CD4-positive, alpha-beta memory T cell (primary cell): ENCODE measurements at regions of chr11 and their contacts with region 1.

Region 1: DNA sequence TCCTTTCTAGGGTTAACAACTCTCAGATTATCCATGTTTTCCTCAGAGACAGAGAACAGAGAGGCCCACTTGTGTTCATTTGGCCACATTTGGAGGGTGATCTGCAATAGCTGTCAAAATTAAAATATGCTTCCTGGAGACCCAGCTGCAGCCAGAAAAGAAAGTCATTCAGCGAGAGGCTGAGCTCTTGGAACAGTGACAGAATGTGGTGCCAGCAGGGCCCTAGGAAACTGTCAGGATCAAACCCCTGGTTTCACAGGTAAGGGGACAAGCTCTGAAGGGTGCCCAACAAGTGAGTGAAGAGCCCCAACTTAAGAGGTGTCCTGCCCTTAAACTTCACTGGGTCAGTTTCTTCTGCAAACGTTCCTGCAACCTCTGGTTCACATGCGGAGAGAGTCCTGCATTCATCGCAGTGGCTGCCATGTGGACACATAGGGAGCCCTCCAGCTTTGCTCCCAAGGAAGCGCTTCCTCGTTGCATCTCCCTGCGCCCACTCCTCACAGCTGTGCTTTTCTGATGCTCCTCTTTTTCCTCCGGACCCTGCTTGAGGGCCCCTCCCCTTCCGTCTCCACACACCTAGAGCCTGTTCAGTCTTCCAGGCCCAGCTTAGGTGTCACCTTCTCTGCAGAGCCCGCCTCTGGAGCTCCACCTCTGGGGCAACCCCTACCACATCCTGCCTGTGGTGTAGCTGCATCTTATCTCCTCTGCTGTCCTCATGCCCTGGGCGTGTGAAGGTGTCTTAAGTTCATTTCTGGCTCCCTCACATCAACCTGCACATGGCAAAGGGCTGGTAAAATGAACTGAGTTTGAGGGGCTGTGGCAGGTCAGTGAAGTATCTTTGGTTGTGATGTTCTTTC is 3.9 kb downstream of the UCP3 start:
- DNase-seq: peak; percentile 88 to 95 (median 91)
- H3K4me3 ChIP-seq: peak overlapping the region; percentile 18 to 50
- H3K4me3 Mint-ChIP-seq: peak overlapping the region; percentile 79 to 91 (median 86)
- H3K27ac ChIP-seq: peak overlapping the region; percentile 60
- H3K27ac Mint-ChIP-seq: peak overlapping the region; percentile 91 to 99 (median 97)
- H3K4me1 ChIP-seq: peaks cover 72% of the 10 kb centered on the region
- H3K4me1 Mint-ChIP-seq: peaks cover 55 to 82% (median 71%) of the 10 kb centered on the region in 4 donors
- H3K27me3 ChIP-seq: no peaks in the 10 kb centered on the region
- H3K27me3 Mint-ChIP-seq: no peaks in the 10 kb centered on the region

Region 2: GRCh38 chr11:73972620-73973449 is 32.2 kb before region 1 on chr11:
- CTCF ChIA-PET with region 1: interaction called, 11 read pairs
- POLR2A ChIA-PET with region 1: interaction called, 2,221 read pairs
- intact Hi-C with region 1: loop called (anchors 1 kb)
- DNase-seq: no peak
- H3K4me3 ChIP-seq: no peak overlapping the region
- H3K4me3 Mint-ChIP-seq: peak overlapping the region in 5 of 8 donors; percentile 26 to 92 (median 77)
- H3K27ac ChIP-seq: peak overlapping the region; percentile 52
- H3K27ac Mint-ChIP-seq: peak overlapping the region; percentile 93 to 100 (median 96)
- H3K4me1 ChIP-seq: peaks cover 100% of the 10 kb centered on the region
- H3K4me1 Mint-ChIP-seq: peaks cover 75 to 100% (median 88%) of the 10 kb centered on the region in 4 donors
- H3K27me3 ChIP-seq: no peaks in the 10 kb centered on the region
- H3K27me3 Mint-ChIP-seq: no peaks in the 10 kb centered on the region

Region 3: GRCh38 chr11:74030723-74031676 is 26.0 kb after region 1 on chr11:
- CTCF ChIA-PET with region 1: interaction called, 8 read pairs
- POLR2A ChIA-PET with region 1: interaction called, 9 read pairs
- intact Hi-C with region 1: loop called (anchors 2 kb)
- DNase-seq: no peak
- H3K4me3 ChIP-seq: no peak overlapping the region
- H3K4me3 Mint-ChIP-seq: peak overlapping the region; percentile 54 to 83 (median 70)
- H3K27ac ChIP-seq: peak overlapping the region; percentile 50
- H3K27ac Mint-ChIP-seq: peak overlapping the region; percentile 49 to 94 (median 91)
- H3K4me1 ChIP-seq: peaks cover 29% of the 10 kb centered on the region
- H3K4me1 Mint-ChIP-seq: peaks cover 30 to 48% (median 36%) of the 10 kb centered on the region in 4 donors
- H3K27me3 ChIP-seq: no peaks in the 10 kb centered on the region
- H3K27me3 Mint-ChIP-seq: no peaks in the 10 kb centered on the region